WTC11 (cell line): ENCODE measurements at regions of chr14 and their contacts with region 1.

Region 1: GRCh38 chr14:76876076-76876475 is 49.9 kb downstream of the LRRC74A start:
- DNase-seq: peak; percentile 76
- ATAC-seq: peak; percentile 95
- H3K4me3 Mint-ChIP-seq: no peak overlapping the region
- H3K27ac Mint-ChIP-seq: no peak overlapping the region
- H3K4me1 Mint-ChIP-seq: peaks cover 5% of the 10 kb centered on the region
- H3K27me3 Mint-ChIP-seq: peaks cover 4% of the 10 kb centered on the region; the same call in 1 of the 2 replicates
- CTCF ChIP-seq: peak; percentile 86

Region 2: DNA sequence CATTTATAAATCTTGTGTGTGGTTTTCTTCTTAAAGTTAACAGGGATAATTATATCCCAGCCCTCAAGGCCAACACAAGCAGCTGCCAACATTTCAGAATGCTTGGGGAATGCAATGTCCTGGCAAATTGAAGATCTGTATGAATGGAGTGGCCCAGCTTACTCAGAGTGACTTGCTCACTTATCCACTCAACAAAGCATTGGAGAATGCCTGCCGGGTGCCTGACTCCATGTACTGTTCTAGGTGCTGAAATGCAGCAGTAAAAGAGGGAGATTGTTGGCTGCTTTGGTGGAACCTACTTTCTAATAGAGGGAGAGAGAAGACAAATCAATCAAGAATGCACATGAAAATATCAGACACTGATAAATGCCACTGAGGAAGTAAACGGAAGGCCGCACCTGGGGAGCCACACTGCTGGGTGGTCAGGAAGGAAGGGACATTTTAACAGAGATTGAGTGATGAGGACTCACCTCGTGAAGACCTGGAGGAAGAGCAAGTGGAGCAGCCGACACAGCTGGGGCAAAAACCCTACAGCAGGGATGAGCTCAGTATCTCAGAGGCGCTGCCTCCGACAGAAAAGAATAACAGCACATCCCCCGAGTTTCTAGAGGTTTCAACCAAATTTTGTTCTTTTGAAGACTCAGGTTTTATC is 176.0 kb before region 1 on chr14:
- CTCF ChIA-PET with region 1: no interaction called
- POLR2A ChIA-PET with region 1: no interaction called
- DNase-seq: no peak
- ATAC-seq: no peak
- H3K4me3 Mint-ChIP-seq: no peak overlapping the region
- H3K27ac Mint-ChIP-seq: no peak overlapping the region
- H3K4me1 Mint-ChIP-seq: no peaks in the 10 kb centered on the region
- H3K27me3 Mint-ChIP-seq: no peaks in the 10 kb centered on the region
- CTCF ChIP-seq: no peak

Region 3: GRCh38 chr14:76710056-76711010 is 165.7 kb before region 1 on chr14:
- CTCF ChIA-PET with region 1: interaction called, 11 read pairs
- POLR2A ChIA-PET with region 1: no interaction called
- DNase-seq: no peak
- ATAC-seq: peak; percentile 56
- H3K4me3 Mint-ChIP-seq: no peak overlapping the region
- H3K27ac Mint-ChIP-seq: no peak overlapping the region
- H3K4me1 Mint-ChIP-seq: peaks cover 4% of the 10 kb centered on the region; the same call in 1 of the 2 replicates
- H3K27me3 Mint-ChIP-seq: no peaks in the 10 kb centered on the region
- CTCF ChIP-seq: peak; percentile 65

Region 4: DNA sequence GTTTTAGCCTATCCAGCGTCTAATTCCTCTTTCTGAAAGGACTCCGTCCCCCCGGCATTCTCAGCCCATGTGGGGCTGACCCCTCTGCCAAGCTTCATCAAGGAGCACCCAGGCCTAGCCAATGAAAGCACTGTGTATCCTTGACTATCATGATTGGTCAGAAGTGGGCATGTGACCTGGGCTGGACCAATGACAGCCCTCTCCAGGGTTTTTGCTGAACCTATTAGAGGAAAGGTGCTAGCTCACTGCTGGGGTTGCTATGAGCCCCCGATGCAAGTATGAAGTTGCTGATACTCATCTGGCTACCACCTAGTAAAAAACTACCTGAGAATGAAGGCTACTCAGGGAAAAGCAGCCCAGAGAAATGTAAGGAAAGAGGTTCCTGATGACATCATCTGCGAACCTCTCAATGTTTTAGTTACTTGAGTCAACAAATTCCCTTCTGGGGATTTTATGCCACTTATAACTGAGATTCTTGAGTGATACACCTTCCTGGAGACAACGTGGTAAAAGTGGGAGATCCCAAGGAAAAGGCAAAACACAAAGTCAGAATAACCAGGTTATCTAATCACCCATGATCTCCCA is 18.3 kb after region 1 on chr14:
- CTCF ChIA-PET with region 1: interaction called, 11 read pairs
- POLR2A ChIA-PET with region 1: no interaction called
- DNase-seq: no peak
- ATAC-seq: peak; percentile 83
- H3K4me3 Mint-ChIP-seq: no peak overlapping the region
- H3K27ac Mint-ChIP-seq: no peak overlapping the region
- H3K4me1 Mint-ChIP-seq: peaks cover 7% of the 10 kb centered on the region; the same call in 1 of the 2 replicates
- H3K27me3 Mint-ChIP-seq: no peaks in the 10 kb centered on the region; the same call in 1 of the 2 replicates
- CTCF ChIP-seq: no peak

Region 5: DNA sequence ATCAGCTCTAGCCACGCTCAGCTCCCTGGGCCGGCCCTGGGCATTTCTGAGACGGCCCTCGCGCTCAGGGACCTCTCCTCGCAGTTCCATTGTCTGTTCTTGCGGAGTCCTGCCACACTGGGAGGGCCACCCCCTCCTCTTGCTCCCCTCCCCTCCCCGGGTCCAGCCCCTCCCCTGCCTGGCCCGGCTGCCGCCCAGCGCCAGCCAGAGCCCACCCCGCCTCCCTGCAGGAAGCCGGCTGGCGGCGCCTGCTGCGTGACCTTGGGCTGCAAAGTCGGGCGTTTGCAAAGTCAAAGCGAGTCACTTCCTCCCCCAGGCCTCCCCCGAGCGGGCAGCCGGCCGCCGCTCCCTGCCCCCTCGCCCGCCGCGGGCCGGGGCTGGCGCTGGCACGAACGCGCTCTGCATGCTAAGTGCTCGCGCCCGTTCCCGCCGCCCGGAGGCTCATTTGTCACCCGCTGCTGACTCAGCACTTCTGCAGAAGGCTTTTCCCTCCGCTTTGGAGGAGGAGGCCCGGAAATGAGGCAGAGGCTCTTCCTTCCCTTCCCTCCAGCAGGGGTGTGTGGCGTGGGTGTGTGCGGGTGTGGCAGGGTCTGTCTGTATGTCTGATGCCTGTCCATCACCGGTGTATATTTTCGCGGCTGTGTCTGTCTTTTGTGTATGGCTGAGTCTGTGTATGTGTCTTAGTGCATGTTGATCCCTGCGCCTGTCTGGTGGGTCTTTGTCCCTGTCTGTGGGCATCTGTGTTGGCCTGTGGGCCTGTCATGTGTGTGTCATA is 80.4 kb after region 1 on chr14:
- CTCF ChIA-PET with region 1: interaction called, 11 read pairs
- POLR2A ChIA-PET with region 1: no interaction called
- DNase-seq: peak; percentile 92
- ATAC-seq: peak; percentile 71
- H3K4me3 Mint-ChIP-seq: peak overlapping the region; percentile 55
- H3K27ac Mint-ChIP-seq: peak overlapping the region; percentile 98
- H3K4me1 Mint-ChIP-seq: peaks cover 71% of the 10 kb centered on the region
- H3K27me3 Mint-ChIP-seq: no peaks in the 10 kb centered on the region
- CTCF ChIP-seq: no peak

Region 6: DNA sequence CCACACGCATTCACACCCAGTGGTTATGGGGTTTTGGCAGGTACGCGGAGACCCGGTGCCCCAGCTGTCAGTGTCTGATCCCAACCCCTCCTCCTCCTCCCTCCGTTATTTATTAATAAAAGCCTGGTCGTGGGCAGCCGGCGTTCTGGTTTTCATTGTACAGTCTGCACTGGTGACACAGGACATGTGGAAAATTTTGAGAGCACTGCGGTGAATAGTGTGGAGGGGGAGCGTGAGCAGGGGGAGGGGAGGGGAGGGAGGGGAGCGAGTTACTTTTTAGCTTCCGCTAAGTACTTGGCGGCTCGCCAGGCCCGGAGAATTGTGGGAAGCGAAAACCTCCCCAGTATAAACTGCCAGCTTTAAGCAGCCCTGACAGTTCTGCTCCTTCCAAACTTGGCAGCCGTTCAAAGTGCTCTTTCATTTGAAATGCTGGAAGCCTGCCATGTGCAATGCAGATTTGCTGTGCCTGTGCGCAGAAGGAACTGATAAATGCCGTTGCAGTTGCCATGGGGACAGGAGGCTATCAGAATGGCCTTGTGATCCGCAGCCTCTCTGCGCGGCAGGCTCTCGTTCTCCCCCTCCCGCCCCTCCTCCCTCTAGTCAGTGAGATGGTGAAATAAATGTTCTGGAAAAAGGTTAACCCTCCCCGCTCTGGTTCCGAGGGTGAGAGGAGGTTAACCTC is 164.1 kb after region 1 on chr14:
- CTCF ChIA-PET with region 1: interaction called, 12 read pairs
- POLR2A ChIA-PET with region 1: no interaction called
- DNase-seq: peak; percentile 78
- ATAC-seq: peak; percentile 51
- H3K4me3 Mint-ChIP-seq: peak overlapping the region; percentile 66
- H3K27ac Mint-ChIP-seq: peak overlapping the region; percentile 99
- H3K4me1 Mint-ChIP-seq: peaks cover 86% of the 10 kb centered on the region
- H3K27me3 Mint-ChIP-seq: peaks cover 7% of the 10 kb centered on the region
- CTCF ChIP-seq: no peak

Region 7: GRCh38 chr14:77067632-77068514 is 191.8 kb after region 1 on chr14:
- CTCF ChIA-PET with region 1: interaction called, 249 read pairs
- POLR2A ChIA-PET with region 1: interaction called, 3 read pairs
- DNase-seq: peak; percentile 83
- ATAC-seq: peak; percentile 86
- H3K4me3 Mint-ChIP-seq: no peak overlapping the region
- H3K27ac Mint-ChIP-seq: no peak overlapping the region
- H3K4me1 Mint-ChIP-seq: peaks cover 27% of the 10 kb centered on the region
- H3K27me3 Mint-ChIP-seq: no peaks in the 10 kb centered on the region
- CTCF ChIP-seq: peak; percentile 74

Region 8: DNA sequence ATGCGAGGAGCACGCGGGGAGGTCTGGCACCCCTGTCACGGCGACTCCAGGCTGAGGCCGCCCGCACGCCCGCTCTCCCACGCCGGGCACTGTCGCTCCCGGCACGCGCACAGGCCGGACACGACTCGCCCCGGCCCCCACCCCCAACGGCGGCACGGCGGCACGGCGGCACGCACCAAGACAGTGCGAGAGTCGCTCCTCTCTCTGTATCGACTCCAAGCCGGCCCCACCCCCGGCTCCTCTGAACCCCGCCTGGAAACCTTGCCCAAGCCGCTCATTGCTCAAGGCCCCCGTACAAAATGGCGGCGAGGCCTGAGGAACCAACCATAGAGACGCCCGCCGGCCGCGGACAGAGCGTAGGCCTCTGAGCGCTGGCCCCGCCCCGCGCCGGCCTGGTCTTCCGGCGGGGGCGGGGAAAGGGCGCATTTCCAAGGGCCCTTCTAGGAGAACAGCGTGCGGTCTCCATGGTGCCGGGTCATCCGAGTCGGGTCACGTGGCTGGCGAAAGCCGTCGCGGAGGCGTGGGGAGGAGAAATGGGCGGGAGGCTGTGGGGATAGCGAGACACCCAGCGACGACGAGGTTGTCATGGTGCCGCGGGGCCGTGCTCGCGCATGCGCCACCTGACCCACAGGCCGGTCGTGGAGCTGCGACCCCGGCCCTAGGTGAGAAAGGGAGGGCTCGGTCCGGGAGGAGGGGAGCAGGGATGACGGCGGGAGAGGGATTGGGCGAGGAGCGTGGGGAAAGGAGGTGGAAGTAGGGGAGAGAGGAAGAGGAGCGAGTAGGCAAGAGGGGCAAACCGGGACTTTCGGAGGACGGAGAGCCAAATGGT is 221.8 kb after region 1 on chr14 and contains the start of gene CIPC:
- CTCF ChIA-PET with region 1: interaction called, 23 read pairs
- POLR2A ChIA-PET with region 1: no interaction called
- DNase-seq: peak; percentile 97
- ATAC-seq: peak; percentile 94
- H3K4me3 Mint-ChIP-seq: peak within 1 kb of the TSS; percentile 84
- H3K27ac Mint-ChIP-seq: peak within 1 kb of the TSS; percentile 95
- H3K4me1 Mint-ChIP-seq: peaks cover 52% of the 10 kb centered on the region
- H3K27me3 Mint-ChIP-seq: no peaks in the 10 kb centered on the region
- CTCF ChIP-seq: no peak
- total RNA-seq, gene CIPC: 22.5 to 25.4 TPM (median 24.2 TPM) in 3 replicates

Region 9: DNA sequence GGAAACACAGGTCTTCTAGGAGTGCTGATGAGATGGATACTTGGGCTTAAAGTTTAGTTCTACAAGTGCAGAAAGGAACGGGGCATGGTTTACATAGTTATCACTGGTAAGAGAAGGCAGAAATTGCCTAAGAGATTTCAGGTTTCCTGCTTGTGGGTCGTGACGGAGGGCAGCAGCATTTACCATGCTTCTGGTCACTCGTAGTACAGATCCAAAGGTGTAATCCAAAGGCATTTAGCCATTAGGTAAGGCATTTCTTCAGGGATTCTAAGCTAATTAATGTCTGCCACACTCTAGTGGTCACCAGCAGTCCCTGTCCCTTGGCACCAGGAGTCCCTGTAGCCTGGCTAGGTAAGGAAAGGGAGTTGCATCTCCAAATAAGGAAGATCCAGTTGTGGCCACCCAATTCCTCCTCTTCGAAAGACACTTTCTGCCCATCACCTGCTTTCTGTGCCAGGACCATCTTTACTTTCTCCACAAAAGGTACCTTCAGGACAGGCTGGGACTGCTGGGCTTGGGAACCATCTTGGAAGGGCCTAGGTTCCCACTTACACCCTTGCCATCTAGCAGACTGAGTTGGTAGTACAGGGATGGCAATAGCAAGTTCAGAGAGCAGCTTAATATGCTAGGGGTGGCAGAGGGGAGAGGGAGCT is 446.3 kb after region 1 on chr14:
- CTCF ChIA-PET with region 1: no interaction called
- POLR2A ChIA-PET with region 1: no interaction called
- DNase-seq: no peak
- ATAC-seq: no peak
- H3K4me3 Mint-ChIP-seq: peak overlapping the region; percentile 96
- H3K27ac Mint-ChIP-seq: peak overlapping the region; percentile 96
- H3K4me1 Mint-ChIP-seq: peaks cover 49% of the 10 kb centered on the region
- H3K27me3 Mint-ChIP-seq: no peaks in the 10 kb centered on the region; the same call in 1 of the 2 replicates
- CTCF ChIP-seq: no peak